Mammary epithelial cell (primary cell): ENCODE measurements at regions of chr14 and their contacts with region 1.

Region 1: DNA sequence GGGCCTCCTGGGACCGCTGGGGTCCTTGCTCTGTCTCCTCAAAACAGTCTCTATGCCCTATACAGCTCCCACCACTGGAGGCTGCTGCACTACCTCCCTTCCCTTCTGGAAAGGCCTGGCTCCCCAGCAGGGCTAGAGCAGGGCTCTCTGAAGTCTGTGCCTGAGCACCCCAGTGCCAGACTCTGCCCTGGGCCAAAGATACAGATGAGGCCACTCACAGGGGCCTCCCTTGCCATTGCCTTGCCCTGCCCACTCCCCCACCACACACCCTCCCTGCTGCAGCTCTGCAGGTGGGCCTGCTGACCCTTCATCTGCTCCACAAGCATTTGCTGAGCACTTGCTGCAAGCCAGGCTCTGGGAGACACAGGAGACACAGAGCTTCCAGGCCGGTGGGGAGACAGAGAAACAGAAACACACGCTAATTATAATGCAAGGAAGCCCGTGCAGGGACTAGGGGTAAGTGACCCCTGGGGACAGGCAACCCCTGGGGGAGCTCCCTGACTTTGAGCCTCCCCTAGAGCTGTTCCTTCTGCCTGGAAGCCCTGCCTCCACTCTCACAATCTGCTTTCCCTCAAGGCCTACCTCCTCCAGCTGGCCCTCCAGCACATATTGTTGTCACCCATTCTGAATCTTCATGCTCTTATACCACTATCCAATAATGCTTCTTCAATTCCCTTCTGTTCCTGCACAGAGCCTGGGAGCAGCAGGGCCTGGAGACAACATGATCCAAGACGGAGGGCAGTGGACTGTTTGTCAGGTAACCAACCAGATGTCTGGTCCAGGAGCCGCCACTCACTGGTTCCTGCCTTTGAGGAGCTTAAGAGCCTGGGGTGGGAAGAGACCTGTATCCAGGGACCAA is 32.6 kb upstream of the PNMA1 start:
- DNase-seq: no peak
- H3K4me3 ChIP-seq: no peak overlapping the region
- H3K27ac ChIP-seq: peak overlapping the region; percentile 88
- H3K4me1 ChIP-seq: peaks cover 84% of the 10 kb centered on the region
- H3K27me3 ChIP-seq: no peaks in the 10 kb centered on the region
- CTCF ChIP-seq: peak; percentile 22 to 52

Region 2: DNA sequence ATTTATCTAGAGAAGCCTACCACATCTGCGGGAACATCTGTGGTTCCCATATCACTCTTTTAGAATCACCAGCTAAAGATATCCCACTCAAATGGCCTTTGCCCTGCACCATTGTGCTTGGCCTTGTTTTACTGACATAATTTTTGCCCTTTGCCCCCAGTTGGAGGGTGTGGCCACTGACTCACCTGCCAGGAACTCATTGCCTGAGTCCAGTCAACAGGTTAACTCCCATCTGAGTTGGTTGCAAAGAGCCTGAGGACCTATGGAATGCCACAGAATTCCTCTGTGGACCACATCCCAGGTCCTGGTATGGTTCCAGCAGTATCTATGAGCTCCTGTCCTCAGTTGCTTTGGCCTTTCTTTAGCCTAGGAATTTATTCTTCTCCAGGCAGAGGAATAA is 49.2 kb after region 1 on chr14:
- CTCF ChIA-PET with region 1: no interaction called
- dilution Hi-C with region 1: loop called (anchors 5 kb)
- in situ Hi-C with region 1: no loop called
- intact Hi-C with region 1: no loop called
- DNase-seq: peak; percentile 81
- H3K4me3 ChIP-seq: no peak overlapping the region
- H3K27ac ChIP-seq: peak overlapping the region; percentile 81
- H3K4me1 ChIP-seq: peaks cover 39% of the 10 kb centered on the region
- H3K27me3 ChIP-seq: no peaks in the 10 kb centered on the region
- CTCF ChIP-seq: no peak